Gastrocnemius medialis (tissue), 4 donors: ENCODE measurements at regions of chr12 and their contacts with region 1.

Region 1: DNA sequence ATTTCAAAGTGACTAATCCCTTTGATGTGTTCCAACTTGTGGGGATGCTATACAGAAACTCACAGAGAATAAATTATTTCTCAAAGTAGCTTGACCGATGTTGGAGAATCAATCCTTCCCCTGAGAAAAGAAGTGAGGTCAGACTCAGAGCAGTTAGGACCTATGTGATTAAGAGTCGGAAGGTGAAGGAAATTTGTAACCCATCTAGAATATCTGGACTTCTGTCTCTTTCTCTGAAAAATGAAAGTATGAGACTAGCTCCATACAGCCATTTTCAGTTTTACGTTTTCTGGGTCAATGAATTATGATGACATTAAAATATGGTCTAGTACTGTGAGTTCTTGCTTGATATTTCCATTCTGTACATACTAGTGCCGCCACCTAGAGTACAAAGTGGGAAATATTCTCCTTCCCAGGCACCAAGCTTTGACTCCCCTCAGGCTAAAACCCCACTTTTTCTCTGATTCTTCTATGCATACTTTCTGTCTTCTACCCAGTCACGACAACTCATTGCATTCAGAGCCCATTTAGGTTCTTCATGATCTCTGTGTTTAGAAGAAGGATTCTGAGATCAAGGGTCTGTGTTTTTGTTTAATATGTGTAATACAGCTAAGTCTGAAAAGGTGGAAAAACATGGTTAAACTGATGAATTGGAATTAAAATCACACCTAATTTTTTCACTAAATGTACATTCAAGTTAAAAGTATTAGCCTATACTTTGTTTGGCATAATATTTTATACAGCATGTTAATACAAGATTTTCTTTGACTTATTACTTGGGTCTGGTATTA is 6.9 kb upstream of the NTS start:
- DNase-seq: no peak
- ATAC-seq: peak in 1 of 2 donors; percentile 58
- H3K4me3 ChIP-seq: no peak overlapping the region
- H3K27ac ChIP-seq: no peak overlapping the region
- H3K4me1 ChIP-seq: no peaks in the 10 kb centered on the region
- H3K27me3 ChIP-seq: no peaks in the 10 kb centered on the region
- CTCF ChIP-seq: peak; percentile 35 to 66 (median 47)
- POLR2A ChIP-seq: no peak

Region 2: GRCh38 chr12:85260904-85261303 is 606.3 kb before region 1 on chr12:
- in situ Hi-C with region 1: no loop called
- intact Hi-C with region 1: no loop called
- DNase-seq: no peak
- ATAC-seq: no peak
- H3K4me3 ChIP-seq: no peak overlapping the region
- H3K27ac ChIP-seq: no peak overlapping the region
- H3K4me1 ChIP-seq: no peaks in the 10 kb centered on the region
- H3K27me3 ChIP-seq: no peaks in the 10 kb centered on the region
- CTCF ChIP-seq: no peak
- POLR2A ChIP-seq: no peak

Region 3: DNA sequence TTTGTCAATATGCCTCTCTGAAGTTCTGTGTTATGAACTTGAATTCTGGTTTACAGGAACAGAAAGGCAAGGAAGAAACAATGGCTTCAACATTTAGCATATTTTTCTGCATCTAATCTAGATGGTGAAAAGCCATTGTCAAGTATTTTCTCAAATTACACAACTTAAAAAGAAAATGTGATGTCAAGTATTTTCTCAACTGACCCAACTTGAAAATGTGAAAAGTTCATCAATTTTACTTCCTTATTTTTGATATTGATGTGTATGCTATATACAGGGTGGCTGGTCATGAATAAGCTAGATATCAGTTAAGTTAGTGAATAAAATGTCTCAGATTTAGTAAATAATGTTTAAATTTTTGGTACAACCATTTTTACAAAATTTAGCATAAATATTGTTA is 390.4 kb before region 1 on chr12:
- in situ Hi-C with region 1: loop called in 3 of 4 experiments (anchors 5 to 25 kb)
- intact Hi-C with region 1: no loop called
- DNase-seq: no peak
- ATAC-seq: no peak
- H3K4me3 ChIP-seq: no peak overlapping the region
- H3K27ac ChIP-seq: no peak overlapping the region
- H3K4me1 ChIP-seq: no peaks in the 10 kb centered on the region
- H3K27me3 ChIP-seq: no peaks in the 10 kb centered on the region
- CTCF ChIP-seq: no peak
- POLR2A ChIP-seq: no peak

Region 4: DNA sequence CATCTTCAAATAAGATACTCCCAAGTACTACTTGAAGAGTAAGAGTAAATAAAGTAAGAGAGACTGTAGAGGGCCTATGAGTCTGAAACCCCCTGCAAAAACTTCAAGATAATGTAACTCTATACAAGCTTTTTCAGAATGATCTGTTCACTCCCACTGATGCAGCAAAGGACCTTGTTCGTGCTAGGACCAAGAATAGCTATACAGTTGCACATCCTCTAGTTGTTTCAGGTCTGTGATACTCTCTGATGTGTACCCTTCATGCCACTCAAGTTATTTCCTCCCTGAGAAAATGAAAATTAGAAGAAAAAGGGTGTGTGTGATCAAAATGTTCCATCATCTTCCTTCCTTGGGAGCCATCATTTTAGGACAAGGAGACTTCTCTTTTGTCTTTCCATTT is 382.8 kb before region 1 on chr12:
- in situ Hi-C with region 1: loop called in 3 of 4 experiments (anchors 5 to 25 kb)
- intact Hi-C with region 1: no loop called
- DNase-seq: no peak
- ATAC-seq: no peak
- H3K4me3 ChIP-seq: no peak overlapping the region
- H3K27ac ChIP-seq: no peak overlapping the region
- H3K4me1 ChIP-seq: no peaks in the 10 kb centered on the region
- H3K27me3 ChIP-seq: no peaks in the 10 kb centered on the region
- CTCF ChIP-seq: no peak
- POLR2A ChIP-seq: no peak

Region 5: GRCh38 chr12:85575120-85576096 is 291.8 kb before region 1 on chr12:
- in situ Hi-C with region 1: loop called (anchors 5 to 10 kb)
- intact Hi-C with region 1: loop called (anchors 1 kb)
- DNase-seq: peak; percentile 2 to 16
- ATAC-seq: peak; percentile 45 to 53
- H3K4me3 ChIP-seq: no peak overlapping the region
- H3K27ac ChIP-seq: no peak overlapping the region
- H3K4me1 ChIP-seq: no peaks in the 10 kb centered on the region
- H3K27me3 ChIP-seq: no peaks in the 10 kb centered on the region
- CTCF ChIP-seq: peak; percentile 11 to 50 (median 25)
- POLR2A ChIP-seq: no peak

Region 6: GRCh38 chr12:85836197-85837090 is 30.7 kb before region 1 on chr12 and contains the start of gene RASSF9:
- in situ Hi-C with region 1: no loop called
- intact Hi-C with region 1: no loop called
- DNase-seq: peak; percentile 13 to 60
- ATAC-seq: peak; percentile 82 to 88
- H3K4me3 ChIP-seq: peak within 1 kb of the TSS; percentile 41 to 57 (median 50)
- H3K27ac ChIP-seq: peak within 1 kb of the TSS; percentile 55 to 76 (median 70)
- H3K4me1 ChIP-seq: peaks cover 0 to 5% of the 10 kb centered on the region in 2 donors
- H3K27me3 ChIP-seq: no peaks in the 10 kb centered on the region
- CTCF ChIP-seq: no peak
- POLR2A ChIP-seq: no peak
- total RNA-seq, gene RASSF9: 0.46 to 1.3 (median 0.90) TPM